ENCODE measurements at regions of chr17 and their contacts with region 1.

Region 1: GRCh38 chr17:48351831-48352332 is 78.1 kb downstream of the SKAP1 start:
- DNase-seq: peak in 2 of 5 donors; percentile 24 to 45
- H3K4me3 ChIP-seq: no peak overlapping the region
- H3K4me3 Mint-ChIP-seq: no peak overlapping the region
- H3K27ac ChIP-seq: no peak overlapping the region
- H3K27ac Mint-ChIP-seq: peak overlapping the region in 4 of 8 donors; percentile 25 to 50 (median 38)
- H3K4me1 ChIP-seq: peaks cover 8% of the 10 kb centered on the region
- H3K4me1 Mint-ChIP-seq: peaks cover 11 to 32% (median 28%) of the 10 kb centered on the region in 3 donors
- H3K27me3 ChIP-seq: no peaks in the 10 kb centered on the region
- H3K27me3 Mint-ChIP-seq: no peaks in the 10 kb centered on the region

Region 2: DNA sequence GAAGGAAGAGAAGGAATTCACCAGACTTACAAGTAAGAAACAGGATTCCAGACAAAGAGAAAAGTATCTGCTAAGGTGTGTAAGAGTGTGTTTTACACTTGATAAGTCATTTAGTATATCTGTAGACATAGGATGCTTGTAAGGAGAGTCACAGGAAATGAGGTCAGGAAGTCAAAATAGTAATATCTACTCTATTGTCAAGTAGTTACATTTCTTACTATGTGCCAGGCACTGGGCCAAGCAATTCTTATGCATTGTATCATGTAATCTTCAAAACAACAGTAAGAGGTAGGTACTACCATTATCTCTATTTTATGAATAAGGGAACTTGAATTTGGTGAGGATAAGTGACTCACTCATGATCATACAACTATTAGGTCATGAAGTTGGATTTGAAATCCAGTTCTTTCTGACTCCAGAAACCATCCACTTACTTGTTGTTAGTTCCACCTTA is 115.2 kb before region 1 on chr17:
- CTCF ChIA-PET with region 1: no interaction called
- POLR2A ChIA-PET with region 1: no interaction called
- DNase-seq: no peak
- H3K4me3 ChIP-seq: no peak overlapping the region
- H3K4me3 Mint-ChIP-seq: no peak overlapping the region
- H3K27ac ChIP-seq: no peak overlapping the region
- H3K27ac Mint-ChIP-seq: peak overlapping the region in 3 of 8 donors; percentile 1 to 19 (median 5)
- H3K4me1 ChIP-seq: peaks cover 35% of the 10 kb centered on the region
- H3K4me1 Mint-ChIP-seq: peaks cover 51 to 84% (median 68%) of the 10 kb centered on the region in 3 donors
- H3K27me3 ChIP-seq: no peaks in the 10 kb centered on the region
- H3K27me3 Mint-ChIP-seq: no peaks in the 10 kb centered on the region

Region 3: DNA sequence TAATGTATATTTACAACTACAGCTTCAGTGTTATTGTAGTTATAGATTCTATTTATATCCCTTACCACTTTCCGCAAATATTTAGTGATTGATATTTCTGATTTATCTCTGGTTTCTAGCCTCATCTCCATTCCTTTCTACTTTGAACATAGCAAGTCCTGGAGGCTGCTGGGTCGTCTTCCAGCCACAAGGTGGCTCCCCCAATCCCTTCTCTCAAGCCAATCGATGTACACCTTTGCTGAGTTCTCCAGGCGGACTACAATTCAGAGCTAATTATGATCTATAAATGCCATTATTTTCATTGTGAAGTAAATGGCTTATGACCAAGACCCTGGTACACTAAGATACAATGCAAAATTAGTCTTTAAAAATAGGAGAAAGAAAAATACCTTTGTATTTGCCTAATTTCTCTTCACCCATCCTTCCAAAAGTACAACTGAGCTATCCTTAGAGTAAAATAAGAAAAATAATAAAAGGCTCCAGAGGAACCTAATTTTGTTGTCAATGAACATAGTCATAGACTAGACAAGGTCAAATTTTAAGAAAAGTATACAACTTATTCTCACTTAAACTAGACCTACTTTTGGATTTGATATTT is 44.0 kb before region 1 on chr17:
- CTCF ChIA-PET with region 1: no interaction called
- POLR2A ChIA-PET with region 1: no interaction called
- DNase-seq: peak; percentile 18 to 64 (median 29)
- H3K4me3 ChIP-seq: no peak overlapping the region
- H3K4me3 Mint-ChIP-seq: no peak overlapping the region
- H3K27ac ChIP-seq: no peak overlapping the region
- H3K27ac Mint-ChIP-seq: peak overlapping the region in 5 of 8 donors; percentile 0 to 22 (median 6)
- H3K4me1 ChIP-seq: no peaks in the 10 kb centered on the region
- H3K4me1 Mint-ChIP-seq: peaks cover 15 to 55% (median 44%) of the 10 kb centered on the region in 3 donors
- H3K27me3 ChIP-seq: no peaks in the 10 kb centered on the region
- H3K27me3 Mint-ChIP-seq: no peaks in the 10 kb centered on the region

Region 4: DNA sequence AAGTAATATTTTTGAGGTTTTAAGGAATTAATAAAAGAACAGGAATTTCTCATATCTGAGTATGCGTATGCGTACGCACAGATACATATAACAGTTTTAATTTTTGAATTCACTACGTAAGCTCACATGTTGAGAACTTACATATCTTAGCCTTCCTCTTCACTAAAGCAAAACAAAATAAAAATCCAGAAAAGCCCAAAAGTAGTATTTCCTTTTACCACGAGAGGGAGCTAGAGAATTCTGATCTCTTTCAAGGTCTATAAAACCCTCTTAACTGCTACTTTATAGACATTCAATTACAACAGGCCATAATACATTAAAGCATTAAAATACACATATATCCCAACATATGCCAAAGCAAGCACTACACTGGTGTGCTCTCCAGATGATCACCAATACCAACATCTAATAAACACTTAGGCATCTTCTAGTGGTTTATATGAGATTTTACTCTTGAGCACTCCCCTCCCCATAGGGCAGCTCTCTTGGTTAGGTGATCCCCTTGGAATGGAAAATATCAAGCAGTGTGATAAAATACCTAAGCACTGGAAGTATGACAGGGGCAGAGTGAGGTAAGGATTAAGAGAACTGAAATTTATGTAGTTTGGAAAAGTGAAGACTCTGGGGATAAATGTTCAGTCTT is 15.9 kb before region 1 on chr17:
- CTCF ChIA-PET with region 1: interaction called, 11 read pairs
- POLR2A ChIA-PET with region 1: interaction called, 4 read pairs
- DNase-seq: peak in 2 of 5 donors; percentile 48 to 61
- H3K4me3 ChIP-seq: no peak overlapping the region
- H3K4me3 Mint-ChIP-seq: no peak overlapping the region
- H3K27ac ChIP-seq: no peak overlapping the region
- H3K27ac Mint-ChIP-seq: peak overlapping the region in 3 of 8 donors; percentile 7 to 51 (median 45)
- H3K4me1 ChIP-seq: peaks cover 6% of the 10 kb centered on the region
- H3K4me1 Mint-ChIP-seq: peaks cover 5 to 31% (median 18%) of the 10 kb centered on the region in 3 donors
- H3K27me3 ChIP-seq: no peaks in the 10 kb centered on the region
- H3K27me3 Mint-ChIP-seq: no peaks in the 10 kb centered on the region

Region 5: GRCh38 chr17:48457080-48457836 is 105.4 kb after region 1 on chr17:
- CTCF ChIA-PET with region 1: interaction called, 21 read pairs
- POLR2A ChIA-PET with region 1: interaction called, 3 read pairs
- DNase-seq: peak; percentile 59 to 84 (median 77)
- H3K4me3 ChIP-seq: peak overlapping the region; percentile 37
- H3K4me3 Mint-ChIP-seq: peak overlapping the region; percentile 4 to 85 (median 71)
- H3K27ac ChIP-seq: no peak overlapping the region
- H3K27ac Mint-ChIP-seq: peak overlapping the region in 3 of 8 donors; percentile 40 to 59 (median 55)
- H3K4me1 ChIP-seq: peaks cover 53% of the 10 kb centered on the region
- H3K4me1 Mint-ChIP-seq: peaks cover 52 to 57% (median 55%) of the 10 kb centered on the region in 3 donors
- H3K27me3 ChIP-seq: no peaks in the 10 kb centered on the region
- H3K27me3 Mint-ChIP-seq: peaks cover 0 to 1% of the 10 kb centered on the region in 2 donors

Region 6: GRCh38 chr17:48646183-48647102 is 294.6 kb after region 1 on chr17:
- CTCF ChIA-PET with region 1: no interaction called
- POLR2A ChIA-PET with region 1: no interaction called
- DNase-seq: peak in 4 of 5 donors; percentile 19 to 62 (median 34)
- H3K4me3 ChIP-seq: peak overlapping the region; percentile 57
- H3K4me3 Mint-ChIP-seq: peak overlapping the region; percentile 82 to 96 (median 87)
- H3K27ac ChIP-seq: no peak overlapping the region
- H3K27ac Mint-ChIP-seq: peak overlapping the region in 4 of 8 donors; percentile 13 to 97 (median 54)
- H3K4me1 ChIP-seq: peaks cover 15% of the 10 kb centered on the region
- H3K4me1 Mint-ChIP-seq: peaks cover 14 to 35% (median 25%) of the 10 kb centered on the region in 3 donors
- H3K27me3 ChIP-seq: peaks cover 30% of the 10 kb centered on the region
- H3K27me3 Mint-ChIP-seq: peaks cover 47 to 52% of the 10 kb centered on the region in 2 donors